ENCODE measurements at regions of chr17 and their contacts with region 1.

Region 1: GRCh38 chr17:60421273-60421934 is 885 bp upstream of the CHCT1 start:
- DNase-seq: peak; percentile 52 to 77 (median 68)
- ATAC-seq: peak; percentile 95
- H3K4me3 ChIP-seq: peak overlapping the region; percentile 63
- H3K4me3 Mint-ChIP-seq: peak overlapping the region; percentile 59 to 88 (median 80)
- H3K27ac ChIP-seq: peak overlapping the region; percentile 38
- H3K27ac Mint-ChIP-seq: peak overlapping the region in 8 of 9 donors; percentile 17 to 82 (median 76)
- H3K4me1 ChIP-seq: peaks cover 4% of the 10 kb centered on the region in 2 donors
- H3K4me1 Mint-ChIP-seq: peaks cover 0 to 11% (median 10%) of the 10 kb centered on the region in 7 donors
- H3K27me3 ChIP-seq: no peaks in the 10 kb centered on the region
- H3K27me3 Mint-ChIP-seq: peaks cover 0 to 7% (median 0%) of the 10 kb centered on the region in 5 donors

Region 2: GRCh38 chr17:60231234-60231633 is 190.2 kb before region 1 on chr17:
- CTCF ChIA-PET with region 1: no interaction called
- POLR2A ChIA-PET with region 1: no interaction called
- intact Hi-C with region 1: loop called in 1 of 2 experiments (anchors 5 kb)
- DNase-seq: no peak
- ATAC-seq: no peak
- H3K4me3 ChIP-seq: no peak overlapping the region
- H3K4me3 Mint-ChIP-seq: no peak overlapping the region
- H3K27ac ChIP-seq: no peak overlapping the region
- H3K27ac Mint-ChIP-seq: no peak overlapping the region
- H3K4me1 ChIP-seq: no peaks in the 10 kb centered on the region
- H3K4me1 Mint-ChIP-seq: no peaks in the 10 kb centered on the region
- H3K27me3 ChIP-seq: no peaks in the 10 kb centered on the region
- H3K27me3 Mint-ChIP-seq: no peaks in the 10 kb centered on the region

Region 3: GRCh38 chr17:60481604-60482003 is 60.2 kb after region 1 on chr17:
- CTCF ChIA-PET with region 1: no interaction called
- POLR2A ChIA-PET with region 1: no interaction called
- intact Hi-C with region 1: no loop called
- DNase-seq: no peak
- ATAC-seq: no peak
- H3K4me3 ChIP-seq: no peak overlapping the region
- H3K4me3 Mint-ChIP-seq: no peak overlapping the region
- H3K27ac ChIP-seq: no peak overlapping the region
- H3K27ac Mint-ChIP-seq: no peak overlapping the region
- H3K4me1 ChIP-seq: no peaks in the 10 kb centered on the region
- H3K4me1 Mint-ChIP-seq: peaks cover 0 to 13% (median 0%) of the 10 kb centered on the region in 7 donors
- H3K27me3 ChIP-seq: no peaks in the 10 kb centered on the region
- H3K27me3 Mint-ChIP-seq: no peaks in the 10 kb centered on the region

Region 4: GRCh38 chr17:60525685-60526514 is 104.5 kb after region 1 on chr17 and contains the start of gene APPBP2:
- CTCF ChIA-PET with region 1: no interaction called
- POLR2A ChIA-PET with region 1: no interaction called
- intact Hi-C with region 1: no loop called
- DNase-seq: peak; percentile 59 to 80 (median 77)
- ATAC-seq: peak; percentile 92
- H3K4me3 ChIP-seq: peak within 1 kb of the TSS; percentile 86
- H3K4me3 Mint-ChIP-seq: peak within 1 kb of the TSS; percentile 98 to 100 (median 99)
- H3K27ac ChIP-seq: peak within 1 kb of the TSS; percentile 99
- H3K27ac Mint-ChIP-seq: peak within 1 kb of the TSS; percentile 96 to 99 (median 98)
- H3K4me1 ChIP-seq: peaks cover 19 to 25% of the 10 kb centered on the region in 2 donors
- H3K4me1 Mint-ChIP-seq: peaks cover 31 to 63% (median 55%) of the 10 kb centered on the region in 7 donors
- H3K27me3 ChIP-seq: no peaks in the 10 kb centered on the region
- H3K27me3 Mint-ChIP-seq: no peaks in the 10 kb centered on the region
- total RNA-seq, gene APPBP2: 24.2 to 47.5 (median 33.0) TPM

Region 5: DNA sequence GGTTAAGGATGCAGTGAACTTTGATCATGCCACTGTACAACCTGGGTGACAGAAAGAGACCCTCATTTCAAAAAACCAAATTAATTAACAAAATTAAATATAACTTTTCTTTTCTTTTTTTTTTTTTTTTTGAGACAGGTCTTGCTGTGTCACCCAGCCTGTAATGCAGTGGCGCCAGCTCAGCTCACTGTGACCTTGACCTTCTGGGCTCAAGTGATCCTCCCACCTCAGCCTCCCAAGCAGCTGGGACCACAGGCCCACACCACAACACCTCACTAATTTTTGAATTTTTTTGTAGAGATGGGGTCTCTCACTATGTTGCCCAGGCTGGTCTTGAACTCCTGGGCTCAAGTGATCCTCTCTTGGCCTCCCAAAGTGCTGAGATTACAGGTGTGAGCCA is 147.2 kb after region 1 on chr17:
- CTCF ChIA-PET with region 1: no interaction called
- POLR2A ChIA-PET with region 1: no interaction called
- intact Hi-C with region 1: loop called (anchors 1 to 2 kb)
- DNase-seq: no peak
- ATAC-seq: no peak
- H3K4me3 ChIP-seq: no peak overlapping the region
- H3K4me3 Mint-ChIP-seq: no peak overlapping the region
- H3K27ac ChIP-seq: no peak overlapping the region
- H3K27ac Mint-ChIP-seq: no peak overlapping the region
- H3K4me1 ChIP-seq: no peaks in the 10 kb centered on the region
- H3K4me1 Mint-ChIP-seq: peaks cover 0 to 9% (median 0%) of the 10 kb centered on the region in 7 donors
- H3K27me3 ChIP-seq: no peaks in the 10 kb centered on the region
- H3K27me3 Mint-ChIP-seq: peaks cover 0 to 17% (median 4%) of the 10 kb centered on the region in 5 donors